ENCODE measurements at regions of chr9 and their contacts with region 1.

Region 1: GRCh38 chr9:4489919-4490704 is at the start of gene SLC1A1:
- DNase-seq: peak; percentile 60
- H3K4me3 ChIP-seq: peak within 1 kb of the TSS; percentile 49 to 70
- H3K27ac ChIP-seq: peak within 1 kb of the TSS; percentile 66 to 76
- H3K4me1 ChIP-seq: no peaks in the 10 kb centered on the region
- H3K27me3 ChIP-seq: no peaks in the 10 kb centered on the region
- CTCF ChIP-seq: peak in 1 of 4 experiments; percentile 5
- POLR2A ChIP-seq: peak; percentile 34
- total RNA-seq, gene SLC1A1: 2.9 to 13.1 TPM

Region 2: DNA sequence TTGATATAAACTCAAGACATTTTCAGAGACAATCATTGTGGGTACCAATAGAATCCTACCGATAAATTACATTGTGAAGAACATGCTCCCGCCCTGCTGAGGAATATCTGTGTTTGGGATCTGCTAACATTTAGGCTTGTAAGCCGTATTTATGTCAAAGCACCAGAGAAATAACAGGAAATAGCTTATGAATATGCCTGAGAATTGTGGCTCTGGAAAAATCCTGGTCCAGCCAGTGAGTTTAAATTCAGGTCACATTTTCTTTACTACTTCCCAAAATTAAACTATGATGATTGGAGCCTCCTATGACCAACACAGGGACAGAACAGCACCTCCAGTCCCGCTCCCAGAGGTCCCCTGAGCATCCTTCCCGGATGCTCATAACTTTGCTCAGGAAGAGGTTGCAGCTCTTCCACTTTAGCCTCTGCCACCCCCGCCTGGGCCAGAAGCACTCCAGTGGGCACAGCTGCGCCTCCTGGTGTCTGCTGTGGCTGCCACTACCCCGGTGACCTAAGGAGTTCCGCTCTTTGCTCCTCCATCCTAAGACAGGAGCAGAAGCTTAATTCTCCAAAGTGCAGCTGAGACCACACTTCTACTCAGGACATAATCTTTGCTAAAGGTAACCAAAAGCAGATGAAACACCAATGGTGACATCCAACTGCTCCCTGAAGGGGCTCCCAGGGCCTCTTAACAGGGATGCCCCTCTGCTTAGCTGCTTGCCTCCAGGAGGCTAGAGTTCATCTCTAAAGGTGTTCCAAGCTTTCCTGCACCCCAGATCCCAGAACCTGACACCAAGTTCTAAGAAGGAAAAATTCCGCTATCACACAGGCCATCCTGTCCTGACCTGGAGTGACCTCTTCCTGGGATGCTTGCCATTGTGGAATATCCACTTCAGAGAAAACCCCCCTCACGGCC is 59.0 kb after region 1 on chr9:
- intact Hi-C with region 1: loop called (anchors 5 kb)
- DNase-seq: no peak
- H3K4me3 ChIP-seq: no peak overlapping the region
- H3K27ac ChIP-seq: peak overlapping the region in 1 of 2 donors; percentile 23
- H3K4me1 ChIP-seq: no peaks in the 10 kb centered on the region
- H3K27me3 ChIP-seq: no peaks in the 10 kb centered on the region
- CTCF ChIP-seq: no peak
- POLR2A ChIP-seq: no peak

Region 3: GRCh38 chr9:4604678-4605095 is 114.6 kb after region 1 on chr9:
- intact Hi-C with region 1: loop called (anchors 5 kb)
- DNase-seq: peak; percentile 75
- H3K4me3 ChIP-seq: no peak overlapping the region
- H3K27ac ChIP-seq: no peak overlapping the region
- H3K4me1 ChIP-seq: no peaks in the 10 kb centered on the region
- H3K27me3 ChIP-seq: no peaks in the 10 kb centered on the region
- CTCF ChIP-seq: peak; percentile 44 to 85 (median 72)
- POLR2A ChIP-seq: no peak